MCF 10A (cell line): ENCODE measurements at regions of chr1 and their contacts with region 1.

Region 1: DNA sequence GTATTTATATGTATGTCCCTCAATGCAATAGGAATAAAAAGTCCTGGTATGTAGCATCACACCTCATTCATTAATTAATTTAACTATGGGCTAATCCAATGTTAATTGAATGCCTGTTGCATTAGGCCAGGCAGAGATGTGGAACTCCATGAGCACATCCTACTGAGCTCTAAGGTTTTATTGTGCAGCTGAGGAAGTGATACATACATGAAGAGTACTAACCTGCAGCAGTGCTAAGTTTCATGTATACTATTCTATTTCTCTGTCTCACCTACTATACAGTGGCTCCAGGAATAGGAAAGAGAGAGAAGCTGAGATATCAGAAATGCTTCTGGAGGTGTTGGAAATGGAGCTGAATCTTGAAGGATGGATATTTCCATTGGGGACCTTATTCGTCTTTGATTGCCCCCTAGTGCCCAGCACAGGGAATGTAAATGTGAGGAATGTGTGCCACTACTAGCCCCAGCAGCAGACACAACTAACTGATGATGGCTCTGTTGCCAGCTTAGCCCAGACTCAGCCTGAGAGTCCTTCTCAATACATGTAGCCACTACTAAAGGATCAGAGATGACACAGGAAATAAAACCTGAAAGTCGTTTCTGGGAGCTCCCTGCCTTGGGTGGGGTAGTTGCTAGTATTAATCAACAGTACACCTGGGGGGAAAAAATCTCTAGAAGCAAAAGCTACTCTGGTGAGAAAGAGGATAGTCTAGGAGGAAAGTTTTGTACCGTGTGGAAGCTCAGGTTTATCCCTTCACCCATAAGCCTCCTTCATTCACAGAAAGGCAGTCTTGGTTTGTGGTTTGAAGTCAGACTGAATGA is 173.3 kb upstream of the FOXD3 start:
- DNase-seq: peak; percentile 62
- H3K4me3 Mint-ChIP-seq: no peak overlapping the region
- H3K27ac Mint-ChIP-seq: no peak overlapping the region
- H3K4me1 Mint-ChIP-seq: no peaks in the 10 kb centered on the region
- H3K27me3 Mint-ChIP-seq: peaks cover 52% of the 10 kb centered on the region
- CTCF ChIP-seq: peak; percentile 33

Region 2: DNA sequence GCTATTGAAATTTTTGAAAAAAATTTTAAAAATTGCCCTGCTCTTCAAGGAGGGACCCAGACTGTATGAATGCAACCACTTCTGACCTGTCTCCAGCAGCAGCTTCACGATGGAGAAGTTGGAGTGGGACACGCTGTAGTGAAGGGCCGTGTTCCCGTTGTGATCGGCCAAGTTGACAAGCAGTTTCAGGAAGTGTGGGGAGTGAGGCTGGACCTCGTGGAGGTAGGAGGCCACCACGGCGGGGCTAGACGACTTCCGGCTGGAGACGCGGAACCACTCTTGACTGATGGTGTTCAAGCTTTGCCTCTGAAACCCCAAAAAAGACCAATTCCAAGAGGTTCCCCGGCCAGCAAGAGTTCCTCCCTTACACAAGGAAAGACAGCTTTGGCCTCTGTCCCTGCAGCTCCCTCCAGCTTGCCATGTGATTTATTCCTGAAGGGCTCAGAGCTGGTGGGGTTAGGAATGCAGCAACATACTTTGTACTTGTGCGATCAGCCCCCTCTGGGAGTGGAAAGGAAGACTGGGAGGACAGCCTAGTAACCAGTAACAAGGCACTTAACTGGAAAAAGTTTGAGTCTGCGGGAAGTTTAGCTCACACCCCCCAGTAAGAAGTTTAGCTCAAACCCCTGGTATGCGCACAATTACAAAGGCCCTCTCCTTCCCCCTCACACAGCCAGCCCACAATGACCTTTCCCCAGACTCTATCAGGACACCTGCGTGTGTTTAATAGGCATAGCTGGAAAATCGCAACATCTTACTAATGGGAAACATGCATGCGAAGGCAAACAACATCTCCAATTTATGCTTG is 885.8 kb before region 1 on chr1:
- CTCF ChIA-PET with region 1: no interaction called
- POLR2A ChIA-PET with region 1: no interaction called
- intact Hi-C with region 1: no loop called
- DNase-seq: no peak
- H3K4me3 Mint-ChIP-seq: no peak overlapping the region
- H3K27ac Mint-ChIP-seq: no peak overlapping the region
- H3K4me1 Mint-ChIP-seq: no peaks in the 10 kb centered on the region
- H3K27me3 Mint-ChIP-seq: no peaks in the 10 kb centered on the region
- CTCF ChIP-seq: no peak

Region 3: DNA sequence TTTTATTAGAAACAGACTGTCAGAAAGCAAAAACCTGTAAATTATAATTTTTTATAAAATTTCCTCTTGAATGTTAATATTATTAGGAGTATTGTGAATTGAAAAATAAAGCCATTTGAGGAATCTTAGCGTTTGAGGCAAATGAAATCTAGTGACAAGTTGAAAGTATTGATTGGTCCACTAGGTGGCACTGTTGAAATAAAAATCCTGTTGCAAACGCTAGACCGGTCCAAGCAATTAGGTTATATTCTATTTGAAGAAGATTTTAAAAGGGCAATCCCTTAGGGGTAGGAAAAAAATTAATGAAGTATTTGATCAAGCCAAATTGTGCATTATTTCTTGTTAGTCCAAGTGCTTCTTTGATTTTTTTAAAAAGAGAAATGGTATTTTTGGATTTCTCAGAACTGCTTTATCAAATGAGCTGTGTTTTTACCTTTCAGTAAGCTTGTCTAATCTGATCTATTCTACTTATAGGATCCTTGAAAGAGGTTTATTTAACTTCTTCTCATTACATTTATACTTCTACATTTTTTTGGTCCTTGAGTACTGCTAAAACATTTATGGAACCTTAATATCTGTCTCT is 307.4 kb before region 1 on chr1:
- CTCF ChIA-PET with region 1: interaction called, 11 read pairs
- POLR2A ChIA-PET with region 1: no interaction called
- intact Hi-C with region 1: loop called (anchors 2 kb)
- DNase-seq: peak; percentile 69
- H3K4me3 Mint-ChIP-seq: no peak overlapping the region
- H3K27ac Mint-ChIP-seq: no peak overlapping the region
- H3K4me1 Mint-ChIP-seq: no peaks in the 10 kb centered on the region
- H3K27me3 Mint-ChIP-seq: no peaks in the 10 kb centered on the region
- CTCF ChIP-seq: peak; percentile 47

Region 4: DNA sequence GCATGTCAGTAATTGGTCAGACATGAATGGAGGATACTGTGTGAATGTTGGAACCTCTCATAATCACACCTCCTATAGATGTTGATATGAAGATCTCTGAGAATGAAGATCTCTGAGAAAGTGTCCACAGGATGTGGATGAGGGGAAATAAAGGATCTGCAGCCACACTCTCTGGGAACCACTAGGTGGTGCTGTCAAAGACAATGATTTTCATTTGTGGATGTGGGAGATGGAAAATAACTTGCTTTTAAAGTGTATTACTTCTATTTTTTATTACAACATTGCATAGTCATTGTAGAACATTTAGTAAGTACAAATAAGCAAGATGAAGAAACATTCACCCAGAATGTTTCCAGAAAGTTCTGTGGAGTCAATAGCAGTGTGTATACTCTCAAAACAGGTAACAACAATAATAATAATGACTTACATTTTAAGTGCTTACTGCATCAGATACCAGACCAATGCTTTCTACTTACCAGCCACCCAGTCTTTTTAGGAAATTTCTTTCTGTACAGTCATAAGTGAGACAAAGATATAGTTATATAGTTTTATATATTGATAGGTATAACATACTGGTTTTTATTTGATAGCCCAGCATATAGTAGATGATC is 236.9 kb before region 1 on chr1:
- CTCF ChIA-PET with region 1: no interaction called
- POLR2A ChIA-PET with region 1: no interaction called
- intact Hi-C with region 1: loop called (anchors 5 kb)
- DNase-seq: peak; percentile 35
- H3K4me3 Mint-ChIP-seq: no peak overlapping the region
- H3K27ac Mint-ChIP-seq: no peak overlapping the region
- H3K4me1 Mint-ChIP-seq: no peaks in the 10 kb centered on the region
- H3K27me3 Mint-ChIP-seq: peaks cover 36% of the 10 kb centered on the region
- CTCF ChIP-seq: peak; percentile 69

Region 5: DNA sequence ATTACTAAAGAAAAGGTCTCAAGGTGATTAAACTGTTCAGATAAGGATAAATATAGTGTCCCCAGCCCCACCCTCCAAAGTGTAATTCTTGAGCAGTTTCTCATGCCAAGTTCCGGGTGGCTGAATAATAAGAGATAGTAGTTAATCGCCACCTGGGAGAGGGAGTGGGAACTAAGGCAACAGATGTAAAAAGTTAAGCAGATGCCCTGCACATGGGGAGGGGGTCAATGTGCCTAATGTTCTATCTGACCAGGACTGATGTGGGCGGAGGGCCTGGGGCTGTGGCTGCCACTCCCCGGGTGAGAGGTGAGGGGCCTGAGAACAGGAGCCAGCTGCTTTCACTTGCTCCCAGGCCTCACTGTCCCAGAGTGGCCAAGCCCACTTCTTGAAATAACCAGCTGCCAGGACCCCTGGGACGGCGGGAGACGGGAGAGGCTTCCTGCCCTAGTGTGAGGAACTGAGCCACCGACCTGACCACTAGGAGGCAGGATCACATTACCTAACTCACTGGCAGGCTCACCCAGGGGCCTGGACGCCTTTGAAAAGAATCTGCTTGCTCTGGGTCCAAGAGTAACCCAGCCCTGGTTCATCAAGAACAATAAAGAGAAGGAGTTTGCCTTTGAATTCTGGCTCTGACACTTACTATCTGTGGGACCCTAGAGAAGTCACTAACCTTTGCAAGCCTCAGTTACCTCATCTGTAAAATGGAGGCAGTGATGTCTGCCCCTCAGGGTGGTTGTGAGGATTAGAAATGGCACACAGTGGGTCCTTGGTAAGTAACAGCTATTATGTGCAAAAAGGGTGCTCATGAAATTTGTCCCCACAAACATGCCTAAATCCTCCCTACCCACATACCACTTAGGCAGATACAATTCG is 185.9 kb before region 1 on chr1:
- CTCF ChIA-PET with region 1: interaction called, 4 read pairs
- POLR2A ChIA-PET with region 1: no interaction called
- intact Hi-C with region 1: loop called (anchors 1 kb)
- DNase-seq: peak; percentile 54
- H3K4me3 Mint-ChIP-seq: no peak overlapping the region
- H3K27ac Mint-ChIP-seq: no peak overlapping the region
- H3K4me1 Mint-ChIP-seq: no peaks in the 10 kb centered on the region
- H3K27me3 Mint-ChIP-seq: peaks cover 34% of the 10 kb centered on the region
- CTCF ChIP-seq: peak; percentile 37

Region 6: DNA sequence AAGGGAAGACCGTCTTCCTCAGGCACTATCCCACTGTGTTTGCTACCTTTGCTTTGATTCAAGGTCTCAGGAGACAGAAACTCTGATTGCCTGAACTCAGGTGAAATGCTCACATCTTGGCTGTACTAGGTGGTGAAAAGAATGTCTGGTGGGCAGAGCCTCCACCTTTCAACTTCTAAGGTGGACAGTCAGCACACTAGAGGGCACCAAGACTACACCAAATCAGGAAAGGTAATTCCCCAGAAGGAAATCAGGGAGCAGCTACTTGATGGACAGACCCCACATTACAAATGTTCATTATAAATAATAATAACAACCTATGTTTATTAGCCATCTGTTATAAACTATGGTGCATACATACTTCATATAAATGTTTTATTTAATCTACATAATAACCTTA is 144.2 kb before region 1 on chr1:
- CTCF ChIA-PET with region 1: interaction called, 3 read pairs
- POLR2A ChIA-PET with region 1: no interaction called
- intact Hi-C with region 1: loop called (anchors 2 kb)
- DNase-seq: peak; percentile 43
- H3K4me3 Mint-ChIP-seq: no peak overlapping the region
- H3K27ac Mint-ChIP-seq: no peak overlapping the region
- H3K4me1 Mint-ChIP-seq: no peaks in the 10 kb centered on the region
- H3K27me3 Mint-ChIP-seq: peaks cover 33% of the 10 kb centered on the region
- CTCF ChIP-seq: peak; percentile 23